Naive thymus-derived CD4-positive, alpha-beta T cell (primary cell): ENCODE measurements at regions of chr2 and their contacts with region 1.

Region 1: GRCh38 chr2:149597668-149598326 is 10.2 kb upstream of the MMADHC start:
- DNase-seq: peak in 8 of 9 donors; percentile 34 to 78 (median 68)
- ATAC-seq: peak; percentile 97
- H3K4me3 ChIP-seq: no peak overlapping the region
- H3K4me3 Mint-ChIP-seq: peak overlapping the region in 8 of 10 donors; percentile 6 to 63 (median 38)
- H3K27ac ChIP-seq: no peak overlapping the region
- H3K27ac Mint-ChIP-seq: peak overlapping the region in 4 of 9 donors; percentile 44 to 67 (median 52)
- H3K4me1 ChIP-seq: no peaks in the 10 kb centered on the region
- H3K4me1 Mint-ChIP-seq: peaks cover 7 to 22% (median 17%) of the 10 kb centered on the region in 7 donors
- H3K27me3 ChIP-seq: no peaks in the 10 kb centered on the region
- H3K27me3 Mint-ChIP-seq: peaks cover 0 to 22% (median 13%) of the 10 kb centered on the region in 5 donors

Region 2: GRCh38 chr2:149715005-149715592 is 117.3 kb after region 1 on chr2:
- CTCF ChIA-PET with region 1: no interaction called
- POLR2A ChIA-PET with region 1: no interaction called
- intact Hi-C with region 1: loop called (anchors 1 to 2 kb)
- DNase-seq: no peak
- ATAC-seq: no peak
- H3K4me3 ChIP-seq: no peak overlapping the region
- H3K4me3 Mint-ChIP-seq: no peak overlapping the region
- H3K27ac ChIP-seq: no peak overlapping the region
- H3K27ac Mint-ChIP-seq: no peak overlapping the region
- H3K4me1 ChIP-seq: no peaks in the 10 kb centered on the region
- H3K4me1 Mint-ChIP-seq: no peaks in the 10 kb centered on the region
- H3K27me3 ChIP-seq: no peaks in the 10 kb centered on the region
- H3K27me3 Mint-ChIP-seq: peaks cover 0 to 12% (median 9%) of the 10 kb centered on the region in 5 donors

Region 3: GRCh38 chr2:150487537-150488429 is 890.0 kb after region 1 on chr2 and contains the start of gene RND3:
- CTCF ChIA-PET with region 1: no interaction called
- POLR2A ChIA-PET with region 1: no interaction called
- intact Hi-C with region 1: loop called in 1 of 2 experiments (anchors 1 kb)
- DNase-seq: peak in 3 of 9 donors; percentile 2 to 45 (median 14)
- ATAC-seq: no peak
- H3K4me3 ChIP-seq: no peak within 1 kb of the TSS
- H3K4me3 Mint-ChIP-seq: peak within 1 kb of the TSS in 9 of 10 donors; percentile 47 to 85 (median 73)
- H3K27ac ChIP-seq: no peak within 1 kb of the TSS
- H3K27ac Mint-ChIP-seq: no peak within 1 kb of the TSS
- H3K4me1 ChIP-seq: no peaks in the 10 kb centered on the region
- H3K4me1 Mint-ChIP-seq: peaks cover 5 to 19% (median 15%) of the 10 kb centered on the region in 7 donors
- H3K27me3 ChIP-seq: peaks cover 0 to 3% of the 10 kb centered on the region in 2 donors
- H3K27me3 Mint-ChIP-seq: peaks cover 56 to 67% (median 59%) of the 10 kb centered on the region in 5 donors
- total RNA-seq, gene RND3: not detected

Region 4: GRCh38 chr2:151051574-151052220 is 1453.9 kb after region 1 on chr2:
- CTCF ChIA-PET with region 1: interaction called, 20 read pairs
- POLR2A ChIA-PET with region 1: no interaction called
- intact Hi-C with region 1: loop called (anchors 1 kb)
- DNase-seq: peak in 6 of 9 donors; percentile 1 to 47 (median 29)
- ATAC-seq: peak; percentile 64
- H3K4me3 ChIP-seq: no peak overlapping the region
- H3K4me3 Mint-ChIP-seq: no peak overlapping the region
- H3K27ac ChIP-seq: no peak overlapping the region
- H3K27ac Mint-ChIP-seq: no peak overlapping the region
- H3K4me1 ChIP-seq: no peaks in the 10 kb centered on the region
- H3K4me1 Mint-ChIP-seq: peaks cover 0 to 5% (median 0%) of the 10 kb centered on the region in 7 donors
- H3K27me3 ChIP-seq: no peaks in the 10 kb centered on the region
- H3K27me3 Mint-ChIP-seq: peaks cover 0 to 11% (median 8%) of the 10 kb centered on the region in 5 donors

Region 5: GRCh38 chr2:151437630-151438029 is 1839.8 kb after region 1 on chr2:
- CTCF ChIA-PET with region 1: interaction called, 3 read pairs
- POLR2A ChIA-PET with region 1: no interaction called
- intact Hi-C with region 1: loop called in 1 of 2 experiments (anchors 1 kb)
- DNase-seq: peak in 5 of 9 donors; percentile 24 to 40 (median 32)
- ATAC-seq: peak; percentile 74
- H3K4me3 ChIP-seq: no peak overlapping the region
- H3K4me3 Mint-ChIP-seq: no peak overlapping the region
- H3K27ac ChIP-seq: no peak overlapping the region
- H3K27ac Mint-ChIP-seq: peak overlapping the region in 8 of 9 donors; percentile 30 to 81 (median 60)
- H3K4me1 ChIP-seq: no peaks in the 10 kb centered on the region
- H3K4me1 Mint-ChIP-seq: peaks cover 6 to 14% (median 12%) of the 10 kb centered on the region in 7 donors
- H3K27me3 ChIP-seq: no peaks in the 10 kb centered on the region
- H3K27me3 Mint-ChIP-seq: no peaks in the 10 kb centered on the region